Body of pancreas (tissue), 4 donors: ENCODE measurements at regions of chr11 and their contacts with region 1.

Region 1: GRCh38 chr11:44538375-44539054 is 26.9 kb upstream of the CD82 start:
- DNase-seq: peak; percentile 69 to 80 (median 72)
- ATAC-seq: peak; percentile 94
- H3K4me3 ChIP-seq: no peak overlapping the region
- H3K27ac ChIP-seq: no peak overlapping the region
- H3K4me1 ChIP-seq: no peaks in the 10 kb centered on the region
- H3K27me3 ChIP-seq: no peaks in the 10 kb centered on the region
- CTCF ChIP-seq: peak; percentile 86 to 95 (median 92)
- POLR2A ChIP-seq: no peak

Region 2: GRCh38 chr11:44110231-44110679 is 428.3 kb before region 1 on chr11:
- intact Hi-C with region 1: loop called (anchors 10 kb)
- DNase-seq: peak; percentile 43 to 65 (median 52)
- ATAC-seq: no peak
- H3K4me3 ChIP-seq: no peak overlapping the region
- H3K27ac ChIP-seq: no peak overlapping the region
- H3K4me1 ChIP-seq: peaks cover 5% of the 10 kb centered on the region
- H3K27me3 ChIP-seq: no peaks in the 10 kb centered on the region
- CTCF ChIP-seq: peak; percentile 21 to 60 (median 49)
- POLR2A ChIP-seq: no peak

Region 3: GRCh38 chr11:44286268-44286880 is 252.1 kb before region 1 on chr11:
- intact Hi-C with region 1: loop called (anchors 5 kb)
- DNase-seq: peak; percentile 36 to 55 (median 46)
- ATAC-seq: peak; percentile 73
- H3K4me3 ChIP-seq: no peak overlapping the region
- H3K27ac ChIP-seq: no peak overlapping the region
- H3K4me1 ChIP-seq: no peaks in the 10 kb centered on the region
- H3K27me3 ChIP-seq: no peaks in the 10 kb centered on the region
- CTCF ChIP-seq: peak; percentile 79 to 90 (median 88)
- POLR2A ChIP-seq: no peak

Region 4: DNA sequence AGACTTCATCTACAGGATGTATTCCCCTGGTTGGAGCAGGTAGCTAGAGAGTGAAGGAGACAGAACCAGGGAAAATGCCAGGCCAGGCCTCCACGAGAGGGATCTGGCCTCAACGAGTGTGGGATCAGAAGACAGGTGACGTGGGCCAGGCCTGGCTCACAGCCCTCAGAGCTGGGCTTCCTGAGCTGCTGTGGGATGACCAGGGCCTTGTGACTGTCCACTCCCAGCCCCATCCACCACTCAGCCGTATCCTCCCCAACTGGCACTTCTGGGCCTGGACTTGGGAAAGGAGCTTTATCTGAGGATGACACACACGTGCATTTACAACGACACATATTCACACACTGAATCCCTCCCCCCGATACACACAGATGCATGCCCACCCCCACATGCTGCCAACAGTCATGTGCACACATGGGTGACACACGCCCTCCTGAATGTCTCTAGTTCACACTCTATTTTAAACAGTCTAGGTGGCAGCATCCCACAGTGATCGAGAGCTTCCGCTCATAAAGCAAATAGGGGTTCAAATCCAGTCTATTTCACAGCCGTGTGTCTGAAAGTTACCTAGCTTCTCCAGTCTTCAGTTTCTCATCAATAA is 319.1 kb after region 1 on chr11:
- intact Hi-C with region 1: no loop called
- DNase-seq: no peak
- ATAC-seq: no peak
- H3K4me3 ChIP-seq: no peak overlapping the region
- H3K27ac ChIP-seq: no peak overlapping the region
- H3K4me1 ChIP-seq: peaks cover 5% of the 10 kb centered on the region
- H3K27me3 ChIP-seq: no peaks in the 10 kb centered on the region
- CTCF ChIP-seq: no peak
- POLR2A ChIP-seq: no peak